PC-9 (cell line): ENCODE measurements at regions of chr2 and their contacts with region 1.

Region 1: GRCh38 chr2:11056614-11057013 is 98.7 kb upstream of the SLC66A3 start:
- DNase-seq: peak; percentile 35 to 82
- H3K4me3 ChIP-seq: no peak overlapping the region
- H3K27ac ChIP-seq: no peak overlapping the region
- H3K4me1 ChIP-seq: peaks cover 6% of the 10 kb centered on the region; the same call in 1 of the 2 replicates
- H3K27me3 ChIP-seq: no peaks in the 10 kb centered on the region
- CTCF ChIP-seq: no peak

Region 2: GRCh38 chr2:9278439-9278838 is 1778.2 kb before region 1 on chr2:
- CTCF ChIA-PET with region 1: interaction called, 12 read pairs
- POLR2A ChIA-PET with region 1: no interaction called
- intact Hi-C with region 1: no loop called
- DNase-seq: no peak
- H3K4me3 ChIP-seq: no peak overlapping the region
- H3K27ac ChIP-seq: no peak overlapping the region
- H3K4me1 ChIP-seq: peaks cover 22% of the 10 kb centered on the region
- H3K27me3 ChIP-seq: no peaks in the 10 kb centered on the region
- CTCF ChIP-seq: no peak; the same call in 1 of the 2 replicates

Region 3: DNA sequence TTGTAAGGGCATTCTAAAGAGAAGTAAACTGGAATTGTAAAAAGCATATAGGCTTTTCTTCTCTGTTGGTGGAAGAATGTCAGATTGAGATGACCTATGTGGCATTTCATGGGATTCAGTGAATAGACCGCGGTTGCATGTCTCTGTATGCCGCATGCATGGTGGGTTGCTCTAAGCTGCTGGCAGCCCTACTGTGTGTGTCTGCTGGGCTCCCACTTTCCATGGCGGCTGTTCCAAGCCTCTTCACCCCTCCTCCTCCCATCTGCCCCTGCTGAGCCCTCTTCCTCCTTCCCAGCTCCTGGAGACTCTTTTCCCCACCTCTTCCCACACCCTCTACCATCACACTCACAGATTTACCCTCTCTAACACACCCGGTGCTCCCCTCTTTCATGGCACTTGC is 322.6 kb before region 1 on chr2:
- CTCF ChIA-PET with region 1: interaction called, 12 read pairs
- POLR2A ChIA-PET with region 1: no interaction called
- intact Hi-C with region 1: no loop called
- DNase-seq: no peak
- H3K4me3 ChIP-seq: no peak overlapping the region
- H3K27ac ChIP-seq: no peak overlapping the region
- H3K4me1 ChIP-seq: peaks cover 9% of the 10 kb centered on the region
- H3K27me3 ChIP-seq: no peaks in the 10 kb centered on the region
- CTCF ChIP-seq: no peak

Region 4: DNA sequence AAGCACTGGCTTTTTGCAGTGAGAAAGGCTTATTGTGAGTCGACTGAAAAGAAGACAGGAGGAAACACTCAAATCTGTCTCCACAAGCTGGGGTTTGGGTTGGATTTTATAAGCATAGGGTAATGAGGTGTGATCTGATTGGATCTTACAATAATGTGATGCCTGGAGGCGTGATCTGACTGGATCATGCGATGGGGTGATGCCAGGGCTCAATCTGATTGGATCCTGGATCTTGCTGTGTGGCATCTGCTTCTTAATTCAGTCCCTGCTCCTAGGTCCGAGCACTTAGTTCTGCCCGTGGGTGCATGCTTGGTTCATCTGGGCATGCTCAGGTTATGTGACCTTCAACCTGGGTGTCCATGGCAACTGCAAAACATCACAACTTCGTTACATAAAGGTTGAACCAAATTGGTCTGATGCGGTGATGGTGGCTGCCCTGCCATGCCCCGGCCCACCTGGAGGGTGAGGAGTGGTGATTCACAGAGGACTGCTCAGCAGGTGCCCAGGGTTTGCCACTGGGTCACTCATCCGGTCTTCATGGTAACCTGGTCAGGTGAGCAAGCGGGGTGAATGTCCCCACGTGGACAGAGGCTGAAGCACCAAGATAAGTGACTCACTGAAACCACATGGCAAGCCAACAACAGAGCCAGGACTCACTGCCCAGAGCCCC is 33.9 kb before region 1 on chr2:
- CTCF ChIA-PET with region 1: no interaction called
- POLR2A ChIA-PET with region 1: no interaction called
- intact Hi-C with region 1: no loop called
- DNase-seq: peak; percentile 79 to 99
- H3K4me3 ChIP-seq: no peak overlapping the region
- H3K27ac ChIP-seq: peak overlapping the region; percentile 69
- H3K4me1 ChIP-seq: peaks cover 29% of the 10 kb centered on the region
- H3K27me3 ChIP-seq: no peaks in the 10 kb centered on the region
- CTCF ChIP-seq: 0 out of 2 replicates have a peak, but pooled peaks have one; percentile 17